ENCODE measurements at regions of chr22 and their contacts with region 1.

Region 1: DNA sequence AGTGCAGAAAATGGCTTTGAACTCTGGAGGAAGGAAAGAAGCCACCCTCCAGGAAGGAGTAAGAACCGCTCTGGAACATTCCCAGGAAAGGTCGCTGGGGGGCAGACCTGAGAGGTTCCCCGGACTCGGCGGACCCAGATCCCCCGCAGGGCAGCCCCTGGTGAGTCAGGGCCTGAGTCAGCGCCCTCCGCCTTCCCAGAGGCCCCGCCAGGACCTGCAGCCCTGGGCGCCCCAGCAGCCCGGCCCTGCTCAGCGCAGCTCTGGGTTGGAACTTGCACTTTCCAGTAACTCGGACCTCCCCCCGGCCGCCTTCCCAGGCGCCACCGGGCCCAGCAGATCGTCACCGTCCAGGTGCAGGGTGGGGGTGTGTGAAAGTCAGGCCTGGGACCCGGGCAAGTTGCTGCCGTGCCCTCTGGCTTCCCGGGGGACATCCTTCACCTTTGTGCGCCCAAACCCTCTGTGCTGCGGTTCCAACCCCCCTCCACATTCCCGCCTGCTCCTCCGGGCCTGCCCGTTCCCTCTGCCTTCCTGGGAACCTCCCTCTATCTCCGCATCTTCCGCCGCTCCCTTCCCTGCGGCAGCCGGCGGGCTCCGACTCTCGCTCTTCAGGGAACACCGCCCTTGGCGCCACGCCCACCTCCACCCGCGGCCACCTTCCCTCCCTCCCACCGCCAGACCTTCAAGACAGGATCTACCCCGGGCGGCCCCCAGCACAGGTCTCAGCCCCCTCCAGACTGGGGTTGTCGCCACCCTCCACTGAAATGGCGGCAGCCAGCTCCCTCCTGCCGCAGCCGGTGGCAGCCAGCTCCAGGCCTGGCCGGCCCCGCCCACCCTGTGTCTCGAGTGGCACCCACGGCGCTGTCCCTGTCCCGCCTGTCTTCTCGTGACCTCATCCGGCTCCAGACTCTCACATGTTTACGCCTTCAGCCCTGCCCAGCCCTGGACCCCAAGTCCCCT is 36.8 kb upstream of the WNT7B start:
- DNase-seq: peak; percentile 91
- H3K4me3 ChIP-seq: peak overlapping the region; percentile 70
- H3K27ac ChIP-seq: peak overlapping the region; percentile 97
- H3K27me3 ChIP-seq: no peaks in the 10 kb centered on the region
- CTCF ChIP-seq: peak; percentile 77

Region 2: GRCh38 chr22:46044621-46045438 is 31.1 kb after region 1 on chr22:
- CTCF ChIA-PET with region 1: no interaction called
- POLR2A ChIA-PET with region 1: no interaction called
- DNase-seq: no peak
- H3K4me3 ChIP-seq: peak overlapping the region; percentile 65
- H3K27ac ChIP-seq: peak overlapping the region; percentile 39
- H3K27me3 ChIP-seq: no peaks in the 10 kb centered on the region
- CTCF ChIP-seq: no peak

Region 3: DNA sequence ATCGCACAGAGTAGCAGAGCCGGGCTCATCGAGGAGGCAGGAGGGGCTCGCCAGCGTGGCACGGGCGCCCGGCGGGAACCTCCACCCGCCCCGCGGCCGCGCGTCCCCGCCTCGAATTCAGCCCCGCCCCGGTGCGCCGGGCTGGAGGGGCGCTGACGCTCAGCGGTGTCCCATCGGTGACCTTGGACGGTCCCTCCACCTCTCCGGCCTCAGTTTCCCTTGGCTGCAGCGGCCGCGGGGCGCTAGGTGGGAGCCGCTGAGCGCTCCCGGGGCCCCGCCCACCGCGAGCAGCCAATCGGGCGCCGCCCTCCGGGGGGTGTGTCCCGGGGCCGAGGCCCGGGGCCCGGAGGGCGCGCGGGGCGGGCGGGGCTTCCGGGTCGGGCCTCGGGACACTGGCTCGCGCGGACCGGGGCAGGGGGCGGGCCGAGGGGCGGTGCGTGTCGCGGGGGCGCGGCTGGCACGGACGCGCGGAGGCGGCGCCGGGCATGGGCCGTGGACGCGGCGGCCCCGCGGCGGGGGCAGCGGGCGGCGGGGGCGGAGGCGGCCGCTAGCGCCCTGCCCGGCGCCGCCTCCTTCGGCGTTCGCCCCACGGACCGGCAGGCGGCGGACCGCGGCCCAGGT is 136.4 kb after region 1 on chr22 and contains the start of gene PPARA:
- CTCF ChIA-PET with region 1: interaction called, 10 read pairs
- POLR2A ChIA-PET with region 1: no interaction called
- DNase-seq: peak; percentile 13
- H3K4me3 ChIP-seq: peak within 1 kb of the TSS; percentile 81
- H3K27ac ChIP-seq: no peak within 1 kb of the TSS
- H3K27me3 ChIP-seq: peaks cover 47% of the 10 kb centered on the region
- CTCF ChIP-seq: no peak
- polyA plus RNA-seq, gene PPARA: 8.5 and 10.4 TPM in 2 replicates